Tibial artery (tissue), 4 donors: ENCODE measurements at regions of chr17 and their contacts with region 1.

Region 1: GRCh38 chr17:7351665-7352501 is at the start of gene KCTD11:
- DNase-seq: peak; percentile 92 to 97
- H3K4me3 ChIP-seq: peak within 1 kb of the TSS; percentile 86 to 91
- H3K27ac ChIP-seq: peak within 1 kb of the TSS; percentile 99
- H3K4me1 ChIP-seq: peaks cover 0 to 73% (median 41%) of the 10 kb centered on the region in 4 donors
- H3K27me3 ChIP-seq: no peaks in the 10 kb centered on the region
- CTCF ChIP-seq: peak in 1 of 2 experiments; percentile 62

Region 2: DNA sequence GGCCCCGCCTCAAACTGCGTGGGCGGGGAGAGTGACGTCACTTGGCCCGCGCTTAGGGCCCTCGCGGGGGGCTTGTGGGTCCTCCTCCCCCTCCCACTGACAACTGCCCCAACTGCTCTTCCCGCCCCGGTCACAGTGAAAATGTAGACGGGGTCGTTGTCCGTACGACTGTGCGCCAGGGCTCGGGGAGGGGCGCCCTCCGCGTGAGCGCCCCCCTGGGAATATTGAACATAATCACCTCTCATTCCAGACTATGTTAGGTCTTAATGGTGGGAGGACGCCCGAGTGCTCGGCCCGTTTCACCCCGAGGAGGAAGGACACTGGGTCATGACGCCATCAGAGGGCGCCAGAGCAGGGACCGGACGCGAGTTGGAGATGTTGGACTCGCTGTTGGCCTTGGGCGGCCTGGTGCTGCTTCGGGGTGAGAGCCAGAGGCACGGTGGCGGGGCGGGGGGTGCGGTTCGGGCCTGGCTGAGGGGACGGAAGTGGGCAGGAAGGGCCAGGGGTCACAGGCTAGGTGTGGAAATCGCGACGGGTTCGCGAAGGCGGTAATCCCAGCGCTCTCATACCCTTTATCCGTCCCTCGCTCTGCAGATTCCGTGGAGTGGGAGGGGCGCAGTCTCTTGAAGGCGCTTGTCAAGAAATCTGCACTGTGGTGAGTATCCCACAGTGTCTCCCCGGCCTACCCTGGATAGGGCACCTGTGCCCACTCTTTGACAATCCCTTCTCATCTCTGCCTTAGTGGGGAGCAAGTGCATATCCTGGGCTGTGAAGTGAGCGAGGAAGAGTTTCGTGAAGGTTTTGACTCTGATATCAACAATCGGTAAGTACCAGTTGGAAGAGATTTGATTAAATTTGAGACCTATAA is 99.5 kb before region 1 on chr17 and contains the start of gene ELP5:
- intact Hi-C with region 1: loop called (anchors 10 kb)
- DNase-seq: peak; percentile 94 to 97
- H3K4me3 ChIP-seq: peak within 1 kb of the TSS; percentile 94 to 98
- H3K27ac ChIP-seq: peak within 1 kb of the TSS; percentile 96 to 100
- H3K4me1 ChIP-seq: peaks cover 0 to 40% (median 32%) of the 10 kb centered on the region in 4 donors
- H3K27me3 ChIP-seq: no peaks in the 10 kb centered on the region
- CTCF ChIP-seq: no peak

Region 3: GRCh38 chr17:7296189-7296902 is 55.5 kb before region 1 on chr17:
- intact Hi-C with region 1: no loop called
- DNase-seq: peak; percentile 74 to 94
- H3K4me3 ChIP-seq: peak overlapping the region; percentile 6 to 27
- H3K27ac ChIP-seq: peak overlapping the region; percentile 29 to 61
- H3K4me1 ChIP-seq: peaks cover 0 to 44% (median 32%) of the 10 kb centered on the region in 4 donors
- H3K27me3 ChIP-seq: peaks cover 0 to 48% of the 10 kb centered on the region in 2 donors
- CTCF ChIP-seq: peak; percentile 92 to 98

Region 4: GRCh38 chr17:7435221-7435675 is 83.4 kb after region 1 on chr17 and contains the start of gene TMEM102:
- intact Hi-C with region 1: loop called (anchors 5 kb)
- DNase-seq: peak; percentile 97 to 98
- H3K4me3 ChIP-seq: peak within 1 kb of the TSS; percentile 55 to 71
- H3K27ac ChIP-seq: peak within 1 kb of the TSS; percentile 59 to 65
- H3K4me1 ChIP-seq: peaks cover 0 to 50% (median 40%) of the 10 kb centered on the region in 4 donors
- H3K27me3 ChIP-seq: peaks cover 3 to 30% of the 10 kb centered on the region in 2 donors
- CTCF ChIP-seq: no peak

Region 5: GRCh38 chr17:7484919-7485377 is 133.1 kb after region 1 on chr17:
- intact Hi-C with region 1: loop called (anchors 1 kb)
- DNase-seq: no peak
- H3K4me3 ChIP-seq: peak overlapping the region; percentile 63 to 69
- H3K27ac ChIP-seq: peak overlapping the region; percentile 99 to 100
- H3K4me1 ChIP-seq: peaks cover 0 to 60% (median 42%) of the 10 kb centered on the region in 4 donors
- H3K27me3 ChIP-seq: no peaks in the 10 kb centered on the region
- CTCF ChIP-seq: peak in 1 of 2 experiments; percentile 22